Endothelial cell of umbilical vein (primary cell): ENCODE measurements at regions of chr12 and their contacts with region 1.

Region 1: DNA sequence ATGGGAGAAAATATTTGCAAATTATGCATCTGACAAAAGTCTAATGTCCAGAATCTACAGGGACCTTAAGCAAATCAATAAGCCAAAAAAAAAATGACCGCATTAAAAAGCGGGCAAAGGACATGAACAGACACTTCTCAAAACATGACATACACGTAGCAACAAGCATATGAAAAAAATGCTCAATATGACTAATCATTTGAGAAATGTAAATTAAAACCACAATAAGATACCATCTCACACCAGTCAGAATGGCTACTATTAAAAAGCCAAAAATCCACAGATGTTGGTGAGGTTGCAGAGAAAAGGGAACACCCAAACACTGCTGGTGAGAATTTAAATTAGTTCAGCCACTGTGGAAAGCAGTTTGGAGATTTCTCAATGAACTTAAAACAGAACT is 16.1 kb downstream of the PAWR start:
- DNase-seq: no peak
- H3K4me3 ChIP-seq: no peak overlapping the region
- H3K27ac ChIP-seq: no peak overlapping the region
- H3K4me1 ChIP-seq: peaks cover 12% of the 10 kb centered on the region
- H3K27me3 ChIP-seq: no peaks in the 10 kb centered on the region
- CTCF ChIP-seq: no peak
- POLR2A ChIP-seq: no peak

Region 2: DNA sequence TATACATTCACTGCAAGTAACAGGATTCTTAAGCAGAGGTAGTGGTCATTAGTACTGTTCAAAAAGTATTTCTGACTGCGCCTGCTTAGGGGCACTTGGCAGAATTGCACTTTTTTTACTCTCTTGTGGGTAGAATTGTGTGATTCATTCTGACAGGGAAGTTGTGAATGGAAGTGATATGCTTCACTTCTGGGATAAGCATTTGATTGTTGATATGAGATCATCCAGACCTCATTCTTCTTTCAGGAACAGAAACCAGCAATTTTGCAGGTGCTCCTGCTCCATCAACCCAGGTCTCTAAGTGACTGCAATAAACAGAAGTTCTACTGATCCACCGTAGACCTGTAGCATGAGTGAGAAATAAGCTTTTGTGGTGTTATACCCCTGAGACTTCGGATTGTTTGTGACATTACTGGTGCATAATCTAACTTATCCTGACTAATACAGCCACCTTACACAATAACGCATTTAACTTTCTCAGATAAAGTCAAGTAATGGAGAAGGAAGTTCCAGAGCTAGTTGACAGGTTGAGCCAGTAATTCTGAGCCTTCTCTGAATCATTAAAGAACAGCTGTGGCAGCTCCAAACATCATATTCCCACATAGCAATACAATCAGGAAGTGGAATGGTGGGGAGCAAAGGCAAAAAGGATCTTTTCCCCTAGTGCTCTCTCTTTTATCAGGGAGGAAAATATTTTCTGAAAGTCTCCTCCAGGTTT is 422.1 kb before region 1 on chr12:
- CTCF ChIA-PET with region 1: no interaction called
- POLR2A ChIA-PET with region 1: no interaction called
- dilution Hi-C with region 1: no loop called
- intact Hi-C with region 1: no loop called
- DNase-seq: peak; percentile 41
- H3K4me3 ChIP-seq: no peak overlapping the region
- H3K27ac ChIP-seq: no peak overlapping the region
- H3K4me1 ChIP-seq: peaks cover 3% of the 10 kb centered on the region
- H3K27me3 ChIP-seq: peaks cover 0 to 1% of the 10 kb centered on the region in 2 experiments
- CTCF ChIP-seq: no peak
- POLR2A ChIP-seq: no peak

Region 3: GRCh38 chr12:79645235-79645630 is 29.4 kb before region 1 on chr12:
- CTCF ChIA-PET with region 1: no interaction called
- POLR2A ChIA-PET with region 1: no interaction called
- dilution Hi-C with region 1: no loop called
- intact Hi-C with region 1: no loop called
- DNase-seq: no peak
- H3K4me3 ChIP-seq: no peak overlapping the region
- H3K27ac ChIP-seq: no peak overlapping the region
- H3K4me1 ChIP-seq: no peaks in the 10 kb centered on the region
- H3K27me3 ChIP-seq: no peaks in the 10 kb centered on the region
- CTCF ChIP-seq: no peak
- POLR2A ChIP-seq: no peak

Region 4: DNA sequence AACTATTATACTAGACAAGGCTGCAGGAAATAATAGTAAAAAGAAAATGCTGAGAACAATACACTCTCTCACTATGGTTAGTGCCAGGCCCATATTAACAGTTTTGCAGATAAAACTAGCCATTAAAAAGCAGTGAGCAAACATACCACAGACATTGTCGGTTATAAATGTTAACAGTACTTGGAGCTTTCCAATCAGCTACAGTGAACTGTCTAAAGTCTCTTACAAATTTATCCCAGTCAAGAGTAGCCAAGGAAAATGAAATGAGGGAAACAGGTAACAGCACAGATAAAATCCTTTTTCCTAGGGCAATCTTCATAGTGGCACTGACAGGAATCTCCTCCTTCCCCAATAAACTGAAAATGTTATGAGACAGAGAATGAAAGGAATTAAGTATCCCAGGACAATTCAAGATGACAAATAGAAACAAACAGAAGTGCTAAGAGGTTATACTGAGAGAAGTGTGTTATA is 14.6 kb before region 1 on chr12:
- CTCF ChIA-PET with region 1: interaction called, 10 read pairs
- POLR2A ChIA-PET with region 1: no interaction called
- dilution Hi-C with region 1: no loop called
- intact Hi-C with region 1: loop called (anchors 1 kb)
- DNase-seq: peak; percentile 49
- H3K4me3 ChIP-seq: no peak overlapping the region
- H3K27ac ChIP-seq: no peak overlapping the region
- H3K4me1 ChIP-seq: peaks cover 8% of the 10 kb centered on the region
- H3K27me3 ChIP-seq: no peaks in the 10 kb centered on the region
- CTCF ChIP-seq: no peak
- POLR2A ChIP-seq: no peak

Region 5: GRCh38 chr12:79685068-79685467 is 10.4 kb after region 1 on chr12:
- CTCF ChIA-PET with region 1: interaction called, 5 read pairs
- POLR2A ChIA-PET with region 1: no interaction called
- dilution Hi-C with region 1: no loop called
- intact Hi-C with region 1: loop called (anchors 1 kb)
- DNase-seq: peak; percentile 75
- H3K4me3 ChIP-seq: peak overlapping the region in 1 of 3 experiments; percentile 12
- H3K27ac ChIP-seq: peak overlapping the region; percentile 54
- H3K4me1 ChIP-seq: peaks cover 36% of the 10 kb centered on the region
- H3K27me3 ChIP-seq: no peaks in the 10 kb centered on the region
- CTCF ChIP-seq: no peak
- POLR2A ChIP-seq: no peak